Colonic mucosa (tissue), 4 donors: ENCODE measurements at regions of chr15 and their contacts with region 1.

Region 1: GRCh38 chr15:95259513-95259912 is 1028.2 kb downstream of the MCTP2 start:
- DNase-seq: peak; percentile 65
- H3K4me3 ChIP-seq: no peak overlapping the region
- H3K27ac ChIP-seq: no peak overlapping the region
- H3K4me1 ChIP-seq: no peaks in the 10 kb centered on the region
- H3K27me3 ChIP-seq: no peaks in the 10 kb centered on the region
- CTCF ChIP-seq: peak; percentile 62

Region 2: DNA sequence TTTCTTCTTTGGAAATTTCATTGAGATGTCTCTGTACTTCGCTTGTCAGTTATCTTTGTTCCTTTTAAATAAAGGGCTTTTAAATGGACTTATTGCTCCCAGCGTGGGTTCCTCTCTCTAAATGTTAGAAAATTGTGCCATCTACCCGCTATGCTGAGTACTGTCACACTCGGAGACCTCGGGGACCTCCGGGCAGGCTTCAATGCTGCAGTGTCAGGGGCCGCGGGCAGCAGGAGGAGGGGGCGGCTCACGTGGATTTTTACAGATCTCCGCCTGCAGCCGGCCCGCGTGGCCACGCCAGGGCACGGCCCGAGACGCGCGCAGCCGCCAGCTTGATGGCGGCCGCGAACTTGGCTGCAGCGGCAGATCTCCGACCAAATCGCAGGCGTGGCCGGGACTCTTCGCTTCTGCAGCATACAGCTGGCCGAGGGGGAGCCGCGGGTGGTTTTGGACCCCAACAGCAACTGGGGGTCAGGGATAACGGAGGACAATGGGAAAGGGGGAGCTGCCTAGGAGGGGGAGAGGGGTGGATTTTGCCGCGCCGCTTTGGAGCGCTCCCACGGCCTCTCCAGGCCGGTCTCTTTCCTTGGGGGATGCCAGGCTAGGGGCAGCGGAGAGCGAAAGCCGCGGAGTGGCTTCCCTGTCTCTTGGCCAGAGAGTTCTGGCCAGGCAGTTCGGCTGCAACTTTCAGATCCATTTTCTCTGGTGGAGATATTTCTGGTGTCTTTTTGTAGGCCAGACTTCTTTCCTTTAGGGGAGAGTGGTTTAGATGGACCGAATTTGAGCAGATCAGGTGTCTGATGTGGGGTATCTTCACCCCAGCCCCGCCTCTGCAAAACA is 1086.3 kb after region 1 on chr15:
- intact Hi-C with region 1: loop called (anchors 5 kb)
- DNase-seq: peak; percentile 62
- H3K4me3 ChIP-seq: peak overlapping the region; percentile 30
- H3K27ac ChIP-seq: peak overlapping the region; percentile 84
- H3K4me1 ChIP-seq: peaks cover 11% of the 10 kb centered on the region
- H3K27me3 ChIP-seq: no peaks in the 10 kb centered on the region
- CTCF ChIP-seq: peak; percentile 31